H1 (cell line): ENCODE measurements at regions of chr9 and their contacts with region 1.

Region 1: DNA sequence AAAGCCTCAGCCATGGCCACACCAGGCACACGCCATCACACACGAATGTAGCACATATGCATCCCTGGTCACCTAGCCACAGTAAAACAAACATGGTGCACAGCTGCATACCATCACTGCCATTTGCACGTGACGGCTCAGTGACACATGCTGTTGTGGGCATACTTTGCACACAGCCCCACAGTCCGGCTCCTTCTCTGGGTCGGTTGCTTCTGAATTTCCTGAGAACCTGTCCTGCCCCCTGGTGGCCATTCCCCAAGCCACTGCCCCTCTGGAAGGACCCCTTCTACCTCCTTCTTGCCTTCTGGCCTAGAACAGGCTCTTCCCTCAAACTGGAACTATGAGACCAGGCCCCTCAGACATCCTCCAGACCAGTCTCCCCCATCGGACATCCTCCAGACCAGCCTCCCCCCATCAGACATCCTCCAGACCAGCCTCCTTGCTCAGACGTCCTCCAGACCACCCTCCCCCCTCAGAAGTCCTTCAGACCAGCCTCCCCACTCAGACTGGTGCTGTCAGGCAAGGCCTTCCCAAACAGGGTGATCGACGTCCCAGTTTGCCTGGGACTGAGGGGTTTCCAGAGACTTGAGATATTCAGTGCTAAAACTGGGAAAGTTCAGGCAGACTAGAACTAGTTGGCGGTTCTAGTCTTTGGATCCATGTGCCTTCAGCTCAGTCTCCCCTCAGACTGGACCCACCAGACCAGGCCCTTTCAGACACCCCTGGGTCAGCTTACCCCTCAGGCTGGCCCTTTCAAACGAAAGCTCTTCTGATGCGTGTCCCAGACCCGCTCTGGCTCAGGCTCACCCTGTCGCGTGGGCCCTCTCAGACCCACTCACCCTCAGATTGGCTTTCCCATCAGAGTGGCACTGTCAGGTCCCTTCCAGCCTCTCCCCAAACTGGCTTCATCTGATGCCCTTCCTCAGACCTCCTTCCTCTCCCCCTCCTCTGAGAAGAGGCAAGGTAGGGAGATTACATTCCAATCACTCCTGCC is 24.3 kb upstream of the ENHO start:
- DNase-seq: peak; percentile 47 to 93
- H3K4me3 ChIP-seq: no peak overlapping the region
- H3K27ac ChIP-seq: no peak overlapping the region
- H3K4me1 ChIP-seq: peaks cover 0 to 2% (median 0%) of the 10 kb centered on the region in 4 experiments; a peak in 1 of 7 replicates
- H3K27me3 ChIP-seq: peaks cover 0 to 10% (median 4%) of the 10 kb centered on the region in 4 experiments; a peak in 5 of 7 replicates
- CTCF ChIP-seq: peak; percentile 77 to 93 (median 87)
- EP300 ChIP-seq: no peak
- POLR2A ChIP-seq: no peak
- RAD21 ChIP-seq: peak; percentile 84 to 88

Region 2: DNA sequence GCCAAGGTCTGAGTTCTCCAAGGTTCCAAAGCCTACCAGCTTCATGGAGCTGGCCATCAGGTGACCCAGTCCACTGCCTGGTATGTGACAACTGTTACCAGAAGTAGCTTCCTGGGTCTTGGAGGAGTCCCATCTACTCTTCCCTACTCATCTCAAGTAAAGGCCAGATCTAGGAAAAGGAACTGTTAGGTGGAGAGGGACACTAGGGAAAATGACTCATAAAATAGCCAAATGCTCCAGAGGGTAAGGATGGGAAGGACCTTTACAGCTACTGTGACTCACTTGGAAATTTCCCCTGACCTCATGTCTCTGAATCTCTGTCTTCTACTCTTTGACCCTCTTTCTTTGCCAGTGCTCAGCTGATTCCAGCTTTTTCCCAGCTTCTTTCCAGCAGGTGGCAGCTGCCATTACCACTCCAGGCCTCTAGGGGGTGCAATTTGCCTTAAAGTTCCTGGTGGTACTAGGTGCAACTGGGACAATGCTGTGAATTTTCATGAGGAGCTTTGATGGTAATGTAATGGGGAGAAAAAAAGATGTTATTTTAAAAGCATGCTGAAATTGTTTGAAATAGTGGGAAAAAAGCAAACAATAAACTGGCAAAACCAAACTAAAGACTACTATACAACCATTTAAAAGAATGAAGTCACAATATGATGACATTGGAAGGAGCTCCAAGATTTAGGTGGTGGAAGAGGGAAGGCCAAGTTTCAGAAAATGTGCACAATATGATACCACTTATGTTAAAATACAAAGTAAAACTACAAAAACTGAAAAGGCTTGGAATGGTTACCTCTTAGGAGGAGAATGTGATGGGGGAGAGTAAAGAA is 143.4 kb before region 1 on chr9:
- CTCF ChIA-PET with region 1: interaction called, 20 read pairs
- POLR2A ChIA-PET with region 1: no interaction called
- DNase-seq: peak in 1 of 2 experiments; percentile 90
- H3K4me3 ChIP-seq: no peak overlapping the region
- H3K27ac ChIP-seq: no peak overlapping the region
- H3K4me1 ChIP-seq: no peaks in the 10 kb centered on the region
- H3K27me3 ChIP-seq: no peaks in the 10 kb centered on the region
- CTCF ChIP-seq: peak; percentile 79 to 98 (median 98)
- EP300 ChIP-seq: no peak
- POLR2A ChIP-seq: no peak
- RAD21 ChIP-seq: peak; percentile 86 to 92

Region 3: GRCh38 chr9:34446468-34446891 is 100.7 kb before region 1 on chr9:
- CTCF ChIA-PET with region 1: interaction called, 25 read pairs
- POLR2A ChIA-PET with region 1: interaction called, 3 read pairs
- DNase-seq: no peak
- H3K4me3 ChIP-seq: no peak overlapping the region
- H3K27ac ChIP-seq: no peak overlapping the region
- H3K4me1 ChIP-seq: peaks cover 2 to 6% (median 5%) of the 10 kb centered on the region in 4 experiments; a peak in 4 of 7 replicates
- H3K27me3 ChIP-seq: no peaks in the 10 kb centered on the region
- CTCF ChIP-seq: no peak
- EP300 ChIP-seq: no peak
- POLR2A ChIP-seq: no peak
- RAD21 ChIP-seq: no peak

Region 4: GRCh38 chr9:34513567-34514214 is 33.4 kb before region 1 on chr9:
- CTCF ChIA-PET with region 1: interaction called, 36 read pairs
- POLR2A ChIA-PET with region 1: no interaction called
- DNase-seq: peak in 1 of 2 experiments; percentile 63
- H3K4me3 ChIP-seq: peak overlapping the region in 1 of 4 experiments; percentile 37; a peak in 1 of 8 replicates
- H3K27ac ChIP-seq: 0 out of 2 replicates have a peak overlapping the region, but pooled peaks have one; percentile 66
- H3K4me1 ChIP-seq: peaks cover 16 to 33% (median 20%) of the 10 kb centered on the region in 4 experiments
- H3K27me3 ChIP-seq: no peaks in the 10 kb centered on the region; a peak in 1 of 7 replicates
- CTCF ChIP-seq: no peak
- EP300 ChIP-seq: no peak
- POLR2A ChIP-seq: no peak
- RAD21 ChIP-seq: no peak

Region 5: GRCh38 chr9:34559624-34560452 is 12.7 kb after region 1 on chr9:
- CTCF ChIA-PET with region 1: interaction called, 97 read pairs
- POLR2A ChIA-PET with region 1: interaction called, 3 read pairs
- DNase-seq: no peak
- H3K4me3 ChIP-seq: no peak overlapping the region
- H3K27ac ChIP-seq: no peak overlapping the region
- H3K4me1 ChIP-seq: peaks cover 7 to 24% (median 16%) of the 10 kb centered on the region in 4 experiments
- H3K27me3 ChIP-seq: no peaks in the 10 kb centered on the region; a peak in 3 of 7 replicates
- CTCF ChIP-seq: no peak
- EP300 ChIP-seq: no peak
- POLR2A ChIP-seq: no peak
- RAD21 ChIP-seq: no peak

Region 6: DNA sequence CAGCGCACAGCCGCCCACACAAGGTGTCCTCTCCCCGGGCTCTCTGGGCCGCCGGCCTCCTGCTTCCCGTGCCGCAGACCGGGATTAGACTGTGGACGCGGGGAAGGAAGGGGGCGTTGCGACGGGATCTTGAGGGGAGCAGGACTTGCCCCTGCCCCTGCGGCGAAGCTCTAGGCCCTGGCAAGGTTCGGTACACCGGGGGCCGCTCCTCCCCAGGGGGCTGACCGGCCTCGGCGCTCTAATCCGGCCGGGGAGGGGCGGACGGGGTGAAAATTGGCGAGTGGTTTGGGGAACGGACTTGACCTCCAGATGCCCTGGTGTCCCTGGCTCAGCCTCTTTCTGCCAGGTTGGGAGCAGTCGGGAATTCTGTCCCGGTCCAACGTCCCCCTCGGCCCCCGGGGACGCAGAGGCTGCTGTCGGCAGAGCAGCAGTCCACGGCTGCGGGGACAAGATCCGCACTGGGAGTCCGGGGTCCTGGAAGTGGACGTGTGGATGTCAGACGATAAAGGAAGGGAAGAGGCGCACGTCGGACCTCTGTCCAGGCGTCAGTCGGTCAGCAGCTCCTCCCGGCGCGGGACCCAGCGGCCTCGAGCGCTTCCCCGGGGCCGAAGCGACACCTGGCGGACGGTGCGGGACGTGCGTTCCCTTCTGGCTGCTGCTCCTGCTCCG is 44.3 kb after region 1 on chr9:
- CTCF ChIA-PET with region 1: interaction called, 157 read pairs
- POLR2A ChIA-PET with region 1: interaction called, 4 read pairs
- DNase-seq: peak in 1 of 2 experiments; percentile 98
- H3K4me3 ChIP-seq: peak overlapping the region in 2 of 4 experiments; percentile 51 to 74; a peak in 4 of 8 replicates
- H3K27ac ChIP-seq: no peak overlapping the region
- H3K4me1 ChIP-seq: peaks cover 4 to 30% (median 16%) of the 10 kb centered on the region in 4 experiments
- H3K27me3 ChIP-seq: peaks cover 67 to 80% (median 75%) of the 10 kb centered on the region in 4 experiments
- CTCF ChIP-seq: peak; percentile 92 to 98 (median 96)
- EP300 ChIP-seq: no peak
- POLR2A ChIP-seq: no peak
- RAD21 ChIP-seq: peak; percentile 91 to 93

Region 7: DNA sequence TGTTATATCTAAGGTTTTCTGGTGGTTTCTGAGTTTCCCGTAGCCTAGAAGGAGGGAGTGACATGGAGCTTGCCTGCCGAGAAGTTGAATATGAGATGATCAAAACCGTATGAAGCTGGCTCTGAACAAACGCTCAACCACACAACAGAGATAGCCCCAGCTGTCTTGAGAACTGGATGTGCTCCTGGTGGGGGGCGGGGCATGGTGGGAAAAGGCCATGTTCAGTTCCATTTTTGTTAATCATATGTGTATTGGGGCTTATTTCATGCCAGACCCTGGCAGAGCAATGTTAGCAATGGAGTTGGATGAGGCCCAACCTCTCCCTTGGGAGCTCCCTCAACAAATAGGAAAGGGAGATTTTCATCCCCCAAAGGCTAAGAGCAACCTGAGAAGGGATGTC is 139.1 kb after region 1 on chr9:
- CTCF ChIA-PET with region 1: no interaction called
- POLR2A ChIA-PET with region 1: no interaction called
- DNase-seq: no peak
- H3K4me3 ChIP-seq: no peak overlapping the region
- H3K27ac ChIP-seq: no peak overlapping the region
- H3K4me1 ChIP-seq: peaks cover 0 to 3% (median 1%) of the 10 kb centered on the region in 4 experiments; a peak in 2 of 7 replicates
- H3K27me3 ChIP-seq: no peaks in the 10 kb centered on the region
- CTCF ChIP-seq: no peak
- EP300 ChIP-seq: no peak
- POLR2A ChIP-seq: no peak
- RAD21 ChIP-seq: no peak